Activated CD4-positive, alpha-beta T cell treated with anti-CD3 and anti-CD28 coated beads for 36 hours (primary cell): ENCODE measurements at regions of chr5 and their contacts with region 1.

Region 1: DNA sequence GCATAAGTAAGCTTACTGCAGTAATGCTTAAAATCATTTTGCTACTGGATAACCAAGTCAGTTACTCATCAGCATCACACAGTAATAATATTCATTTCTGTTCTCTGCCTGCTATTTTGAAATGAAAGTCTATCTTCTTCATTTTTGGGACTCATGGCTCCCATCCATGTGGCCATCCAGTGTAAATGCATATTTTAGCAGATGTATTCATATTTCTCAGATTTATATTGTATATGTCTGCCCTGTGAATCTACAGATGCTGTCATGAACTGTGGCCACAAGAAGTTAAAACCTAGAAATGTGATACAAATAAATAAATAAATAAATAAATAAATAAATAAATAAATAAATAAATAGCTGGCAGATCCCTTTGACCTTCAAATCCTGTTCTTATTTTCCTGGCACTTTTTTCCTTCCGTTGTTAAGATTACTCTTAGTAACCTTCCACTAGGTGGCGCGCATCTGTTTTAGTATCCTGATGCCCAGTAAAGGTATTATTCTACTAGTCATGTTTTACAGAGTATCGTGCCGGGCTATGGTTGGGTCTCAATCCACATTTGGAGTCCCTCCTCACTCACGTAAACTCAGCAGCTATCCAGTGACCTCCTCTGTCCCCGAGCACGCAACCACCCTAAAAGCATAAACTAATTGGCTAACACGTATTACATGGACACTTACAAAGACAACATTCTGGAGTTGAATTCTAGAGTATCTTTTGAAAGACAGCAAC is 79.2 kb upstream of the IL7R start:
- DNase-seq: peak; percentile 86
- ATAC-seq: peak; percentile 33
- H3K4me3 Mint-ChIP-seq: peak overlapping the region; percentile 17
- H3K27ac Mint-ChIP-seq: peak overlapping the region; percentile 79
- H3K4me1 Mint-ChIP-seq: peaks cover 84% of the 10 kb centered on the region
- H3K27me3 Mint-ChIP-seq: no peaks in the 10 kb centered on the region

Region 2: GRCh38 chr5:35617435-35618303 is 159.9 kb before region 1 on chr5 and contains the start of gene SPEF2:
- CTCF ChIA-PET with region 1: interaction called, 3 read pairs
- POLR2A ChIA-PET with region 1: no interaction called
- intact Hi-C with region 1: loop called (anchors 2 kb)
- DNase-seq: peak; percentile 91
- ATAC-seq: peak; percentile 92
- H3K4me3 Mint-ChIP-seq: peak within 1 kb of the TSS; percentile 83
- H3K27ac Mint-ChIP-seq: peak within 1 kb of the TSS; percentile 99
- H3K4me1 Mint-ChIP-seq: peaks cover 31% of the 10 kb centered on the region
- H3K27me3 Mint-ChIP-seq: no peaks in the 10 kb centered on the region
- total RNA-seq, gene SPEF2: 14.1 to 14.6 TPM

Region 3: DNA sequence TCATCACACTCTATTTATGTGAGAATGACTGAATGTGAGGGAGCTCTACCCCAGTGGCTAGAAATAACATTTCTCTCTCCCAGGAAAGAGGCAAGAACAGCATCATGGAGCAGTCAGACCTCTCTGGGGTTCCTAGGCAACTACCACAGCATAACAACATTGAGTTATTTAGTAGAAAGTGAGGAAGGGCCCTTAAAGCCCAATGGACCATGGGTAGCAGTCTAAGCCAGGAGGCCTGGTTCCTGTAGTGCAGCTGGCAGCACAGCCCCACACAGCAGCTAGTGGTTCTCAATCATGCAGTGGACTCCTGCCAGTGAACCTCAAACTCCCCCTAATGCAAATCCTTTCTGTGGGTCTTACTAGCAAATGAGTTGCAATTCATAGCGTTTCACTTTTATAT is 104.5 kb before region 1 on chr5:
- CTCF ChIA-PET with region 1: interaction called, 8 read pairs
- POLR2A ChIA-PET with region 1: no interaction called
- intact Hi-C with region 1: loop called (anchors 2 to 5 kb)
- DNase-seq: peak; percentile 65
- ATAC-seq: peak; percentile 84
- H3K4me3 Mint-ChIP-seq: no peak overlapping the region
- H3K27ac Mint-ChIP-seq: peak overlapping the region; percentile 77
- H3K4me1 Mint-ChIP-seq: peaks cover 60% of the 10 kb centered on the region
- H3K27me3 Mint-ChIP-seq: no peaks in the 10 kb centered on the region

Region 4: DNA sequence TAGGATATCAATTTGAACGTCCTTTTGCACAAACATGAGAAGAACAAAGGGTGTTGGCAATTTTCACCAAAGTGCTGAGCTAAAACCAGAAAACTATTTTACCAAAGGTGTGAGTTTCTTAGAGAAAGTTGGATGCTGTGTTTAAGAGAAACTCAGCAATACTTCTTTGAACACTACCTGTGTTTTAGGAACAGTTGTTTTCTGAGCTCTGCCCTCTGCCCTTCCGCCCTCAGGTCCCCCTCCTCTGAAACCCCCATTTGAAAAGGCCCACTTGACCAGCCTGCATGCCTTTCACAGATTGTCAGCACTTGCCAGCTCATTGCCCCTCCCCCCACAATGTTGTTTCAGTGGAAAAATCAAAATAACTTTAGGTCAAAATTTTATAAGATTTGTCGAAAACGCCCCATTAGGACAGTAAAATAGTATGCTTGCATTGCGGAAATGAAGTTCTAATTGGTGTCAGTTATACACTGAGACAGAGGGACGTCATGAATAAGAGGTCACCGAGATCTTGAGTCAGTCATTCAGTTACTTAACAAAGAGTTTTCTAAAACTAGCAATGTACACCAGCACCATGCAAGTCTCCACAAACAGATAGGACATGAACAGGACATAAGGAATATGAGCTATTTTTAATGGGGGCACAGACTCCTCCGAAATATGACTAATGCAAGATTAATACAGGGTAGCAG is 17.3 kb after region 1 on chr5:
- CTCF ChIA-PET with region 1: interaction called, 32 read pairs
- POLR2A ChIA-PET with region 1: interaction called, 4 read pairs
- intact Hi-C with region 1: no loop called
- DNase-seq: peak; percentile 45
- ATAC-seq: peak; percentile 40
- H3K4me3 Mint-ChIP-seq: peak overlapping the region; percentile 25
- H3K27ac Mint-ChIP-seq: peak overlapping the region; percentile 91
- H3K4me1 Mint-ChIP-seq: peaks cover 90% of the 10 kb centered on the region
- H3K27me3 Mint-ChIP-seq: no peaks in the 10 kb centered on the region

Region 5: DNA sequence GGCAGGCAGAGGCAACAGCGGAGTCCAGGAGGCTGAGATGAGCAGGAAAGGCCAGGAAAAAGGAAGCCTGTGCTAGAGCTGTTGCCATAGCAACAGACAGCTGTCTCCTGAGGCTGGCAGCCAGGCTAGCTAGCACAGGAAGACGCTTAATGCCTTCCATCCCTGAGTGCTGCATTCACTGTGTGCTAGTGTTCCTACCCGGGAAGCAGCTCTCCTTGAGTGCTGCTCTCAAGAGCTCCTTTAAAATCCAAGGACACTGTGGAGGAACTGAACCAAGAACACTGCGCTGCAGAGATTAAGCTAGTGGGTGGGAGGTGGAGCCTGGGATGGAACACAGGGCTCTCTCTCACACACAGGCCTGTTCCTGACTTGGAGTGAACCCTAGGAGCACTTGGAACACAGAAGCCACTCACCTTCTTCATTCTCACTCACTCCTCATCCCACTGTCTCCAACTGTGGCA is 25.7 kb after region 1 on chr5:
- CTCF ChIA-PET with region 1: interaction called, 13 read pairs
- POLR2A ChIA-PET with region 1: no interaction called
- intact Hi-C with region 1: no loop called
- DNase-seq: no peak
- ATAC-seq: peak; percentile 24
- H3K4me3 Mint-ChIP-seq: peak overlapping the region; percentile 0
- H3K27ac Mint-ChIP-seq: peak overlapping the region; percentile 80
- H3K4me1 Mint-ChIP-seq: peaks cover 78% of the 10 kb centered on the region
- H3K27me3 Mint-ChIP-seq: no peaks in the 10 kb centered on the region

Region 6: DNA sequence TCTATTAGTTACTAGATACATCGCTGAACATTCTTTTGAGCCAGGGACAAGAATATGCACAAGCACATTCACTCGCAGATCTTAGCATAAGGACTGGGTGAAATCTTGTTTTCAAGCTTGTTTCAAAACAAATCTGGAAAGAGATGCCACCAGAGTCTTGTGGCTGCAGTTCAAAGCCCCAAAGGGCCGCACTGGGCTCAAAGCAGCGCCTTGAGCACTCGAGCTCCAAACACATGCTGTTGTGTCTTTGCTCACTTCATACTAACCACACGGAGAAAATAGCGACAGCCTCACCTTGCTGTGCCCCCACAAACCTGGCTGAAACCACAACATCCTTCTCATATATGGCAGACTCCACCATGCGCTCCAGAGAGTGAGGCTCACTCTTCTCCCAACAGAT is 45.0 kb after region 1 on chr5:
- CTCF ChIA-PET with region 1: interaction called, 35 read pairs
- POLR2A ChIA-PET with region 1: no interaction called
- intact Hi-C with region 1: loop called in 1 of 2 experiments (anchors 2 kb)
- DNase-seq: peak; percentile 63
- ATAC-seq: no peak
- H3K4me3 Mint-ChIP-seq: peak overlapping the region; percentile 58
- H3K27ac Mint-ChIP-seq: peak overlapping the region; percentile 98
- H3K4me1 Mint-ChIP-seq: peaks cover 89% of the 10 kb centered on the region
- H3K27me3 Mint-ChIP-seq: no peaks in the 10 kb centered on the region

Region 7: DNA sequence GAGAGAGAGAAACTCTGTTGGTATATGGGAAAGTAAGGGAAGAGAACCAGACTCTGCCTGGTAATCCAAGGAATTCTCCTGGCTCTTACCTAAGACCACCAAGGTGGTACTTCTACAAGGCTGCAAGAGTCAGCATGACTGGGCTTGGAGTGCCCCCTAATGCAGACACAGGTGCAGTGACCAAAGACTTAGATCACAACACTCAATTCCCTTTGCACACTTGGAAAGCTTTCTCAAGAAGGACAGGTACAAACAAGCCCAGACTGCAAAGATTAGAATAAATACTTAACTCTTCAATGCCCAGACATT is 264.0 kb after region 1 on chr5:
- CTCF ChIA-PET with region 1: no interaction called
- POLR2A ChIA-PET with region 1: no interaction called
- intact Hi-C with region 1: no loop called
- DNase-seq: no peak
- ATAC-seq: no peak
- H3K4me3 Mint-ChIP-seq: no peak overlapping the region
- H3K27ac Mint-ChIP-seq: no peak overlapping the region
- H3K4me1 Mint-ChIP-seq: no peaks in the 10 kb centered on the region
- H3K27me3 Mint-ChIP-seq: peaks cover 13% of the 10 kb centered on the region